Right ventricle myocardium inferior (tissue), 1 donor: ENCODE measurements at regions of chr22 and their contacts with region 1.

Region 1: GRCh38 chr22:40636380-40637182 is at the start of gene MRTFA:
- DNase-seq: peak; percentile 100
- ATAC-seq: peak; percentile 96
- total RNA-seq, gene MRTFA: 26.7 TPM

Region 2: GRCh38 chr22:40509401-40510134 is 127.0 kb before region 1 on chr22:
- intact Hi-C with region 1: loop called (anchors 5 kb)
- DNase-seq: no peak
- ATAC-seq: peak; percentile 69

Region 3: DNA sequence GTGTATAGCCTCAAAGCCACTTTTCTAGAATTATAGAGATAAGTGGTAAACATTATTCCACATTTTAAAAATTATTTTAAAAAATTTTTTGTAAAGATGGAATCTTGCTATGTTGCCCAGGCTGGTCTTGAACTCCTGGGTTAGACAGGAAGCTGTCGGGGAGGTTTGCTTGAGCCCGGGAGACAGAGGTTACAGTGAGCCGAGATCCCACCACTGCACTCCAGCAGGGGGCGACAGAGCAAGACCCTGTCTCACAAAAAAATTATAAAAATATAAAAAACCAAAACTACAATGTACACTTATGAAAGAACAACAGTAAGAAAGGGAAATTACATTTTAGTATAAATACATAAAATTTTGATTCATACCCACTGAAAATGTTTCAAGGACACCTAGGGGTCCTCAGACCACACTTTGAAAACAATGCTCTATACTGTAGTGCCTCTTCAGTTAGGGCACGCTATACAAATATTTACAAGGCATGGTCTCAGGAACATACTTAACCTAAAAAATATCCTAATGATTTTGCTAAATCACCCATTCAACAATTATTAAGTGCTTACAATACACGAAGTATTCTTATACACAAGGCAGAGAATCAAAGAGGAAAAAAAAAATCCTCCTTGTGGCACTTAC is 111.2 kb before region 1 on chr22:
- intact Hi-C with region 1: loop called (anchors 2 kb)
- DNase-seq: peak; percentile 69
- ATAC-seq: no peak

Region 4: DNA sequence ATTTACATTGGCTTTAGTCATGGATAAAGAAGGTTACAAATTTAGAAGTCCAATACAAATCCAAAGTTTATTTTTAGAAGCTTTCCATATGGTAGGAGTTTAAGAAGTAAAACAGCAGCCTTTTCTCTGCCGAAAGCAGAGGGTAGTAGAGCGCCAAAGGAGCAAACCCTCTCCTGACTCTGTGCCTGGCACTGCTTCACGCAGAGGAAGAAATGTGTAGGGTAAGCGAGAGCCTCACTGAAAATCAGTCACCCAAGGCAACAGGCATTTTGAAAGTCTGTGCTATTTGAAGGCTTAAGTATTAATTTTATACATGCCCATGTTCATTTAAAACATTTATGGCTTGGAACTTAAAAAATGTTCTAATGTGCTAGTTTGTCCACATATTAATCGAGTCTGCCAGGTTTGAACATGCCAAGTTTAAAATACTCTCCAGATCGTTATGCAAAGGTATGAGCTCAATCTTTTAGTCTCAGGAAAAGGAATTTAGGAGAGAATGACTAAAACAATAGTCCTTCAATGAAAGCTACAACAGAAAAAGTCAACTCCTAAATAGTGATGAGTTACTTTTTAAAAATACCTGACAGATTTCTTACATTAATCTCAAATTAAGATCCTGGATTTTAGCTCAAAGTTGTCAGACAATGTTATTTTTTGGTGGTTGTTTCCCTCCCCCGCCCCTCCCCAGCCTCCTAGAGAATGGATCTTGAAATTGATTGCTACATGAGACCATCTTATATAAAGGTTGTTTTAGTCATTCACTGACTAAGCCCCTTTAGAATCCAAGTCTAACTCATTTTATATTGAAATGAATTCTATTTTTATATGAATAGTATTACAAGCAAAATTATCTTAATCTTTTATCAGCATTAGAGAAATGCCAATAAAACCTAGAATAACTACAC is 38.8 kb before region 1 on chr22:
- intact Hi-C with region 1: loop called (anchors 5 kb)
- DNase-seq: no peak
- ATAC-seq: no peak

Region 5: GRCh38 chr22:40922484-40923303 is 286.1 kb after region 1 on chr22:
- intact Hi-C with region 1: no loop called
- DNase-seq: no peak
- ATAC-seq: peak; percentile 67